ENCODE measurements at regions of chr1 and their contacts with region 1.

Region 1: DNA sequence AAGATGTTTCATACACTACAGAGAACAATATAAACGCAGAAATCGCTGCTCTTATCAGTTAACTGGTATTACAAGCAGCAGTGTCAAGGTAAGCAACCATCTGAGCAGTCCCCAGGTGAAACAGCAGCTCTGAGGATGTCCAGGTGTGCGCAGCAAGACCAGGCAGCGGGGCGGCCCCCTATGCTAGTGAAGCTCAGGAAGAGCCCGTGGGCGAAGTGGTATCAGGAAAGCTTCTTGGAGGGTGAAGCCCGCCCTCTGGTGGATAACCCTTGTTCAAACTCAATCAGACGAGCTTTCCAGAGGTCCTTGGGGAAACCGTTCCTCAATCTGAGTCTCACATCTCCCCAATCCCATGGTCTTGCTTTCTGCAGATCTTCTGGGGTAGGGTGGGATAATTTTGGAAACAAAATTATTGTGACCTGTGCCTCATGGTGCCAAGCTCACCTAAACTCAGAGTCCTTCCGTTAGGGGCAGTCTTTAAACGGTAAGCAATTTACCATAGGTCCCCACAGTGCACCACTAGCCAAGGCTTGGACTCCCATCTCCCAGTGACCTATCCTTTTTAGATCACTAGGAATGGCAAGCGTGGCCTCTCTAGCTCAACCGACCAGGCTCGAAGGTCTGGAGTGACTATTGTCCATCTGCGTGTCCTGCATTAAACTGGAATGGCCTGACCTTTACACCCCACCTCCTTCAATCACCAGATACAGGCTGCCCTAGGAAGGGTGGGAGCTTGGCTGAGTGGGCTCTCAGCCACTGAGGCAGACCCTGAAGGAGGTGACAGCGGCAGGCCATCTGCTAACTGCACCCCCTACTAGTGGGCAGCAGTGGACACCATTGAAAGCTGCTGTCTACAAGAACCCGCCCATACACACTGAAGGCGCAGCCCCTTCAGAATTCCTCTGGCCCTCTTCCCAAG is 13.6 kb upstream of the FAM110D start:
- DNase-seq: peak; percentile 88
- H3K4me3 Mint-ChIP-seq: no peak overlapping the region
- H3K27ac Mint-ChIP-seq: no peak overlapping the region
- H3K4me1 Mint-ChIP-seq: peaks cover 2% of the 10 kb centered on the region
- H3K27me3 Mint-ChIP-seq: no peaks in the 10 kb centered on the region

Region 2: DNA sequence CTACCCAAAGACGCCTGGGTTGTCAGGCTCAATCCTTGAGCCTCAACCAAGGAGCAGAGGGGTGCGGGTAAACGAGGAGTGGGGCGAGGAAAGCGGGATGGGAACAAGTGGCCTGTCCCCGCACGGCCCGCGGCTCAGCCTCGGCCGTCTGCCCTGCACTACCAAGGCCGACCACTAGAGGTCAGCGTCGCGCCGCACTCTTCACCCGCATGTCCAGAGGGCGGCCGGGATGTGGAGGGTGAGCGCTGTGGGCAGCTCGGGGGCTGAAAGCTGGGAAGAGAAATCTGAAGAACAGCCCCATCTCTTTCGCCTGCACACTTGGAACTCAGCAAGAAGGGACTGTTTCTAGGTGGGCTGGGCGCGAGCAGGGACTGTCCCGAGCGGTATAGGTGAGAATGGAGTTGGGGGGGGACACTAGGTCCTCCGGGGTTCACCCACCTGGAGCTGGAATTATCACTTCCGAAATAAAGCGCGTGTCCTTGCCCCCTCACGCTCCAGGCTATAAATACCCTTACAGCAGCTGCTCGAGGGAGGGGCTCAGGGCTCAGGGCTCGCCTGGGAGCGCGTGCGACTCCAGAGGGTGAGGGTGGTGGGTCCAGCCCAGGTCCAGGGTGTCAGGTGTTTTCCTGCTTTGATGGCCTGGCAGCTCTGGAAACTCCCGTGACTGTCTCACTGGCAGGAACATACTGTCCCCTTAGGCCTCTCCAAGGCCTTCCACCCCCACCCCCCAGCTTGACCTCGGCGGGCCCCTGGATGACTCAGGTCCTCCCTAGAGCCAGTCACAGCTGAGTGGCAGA is 109.1 kb before region 1 on chr1:
- CTCF ChIA-PET with region 1: interaction called, 26 read pairs
- intact Hi-C with region 1: loop called (anchors 1 kb)
- DNase-seq: peak; percentile 78
- H3K4me3 Mint-ChIP-seq: peak overlapping the region; percentile 88
- H3K27ac Mint-ChIP-seq: no peak overlapping the region
- H3K4me1 Mint-ChIP-seq: peaks cover 13% of the 10 kb centered on the region
- H3K27me3 Mint-ChIP-seq: peaks cover 3% of the 10 kb centered on the region

Region 3: GRCh38 chr1:26102526-26102925 is 42.8 kb before region 1 on chr1:
- CTCF ChIA-PET with region 1: interaction called, 143 read pairs
- intact Hi-C with region 1: loop called (anchors 1 kb)
- DNase-seq: no peak
- H3K4me3 Mint-ChIP-seq: no peak overlapping the region
- H3K27ac Mint-ChIP-seq: no peak overlapping the region
- H3K4me1 Mint-ChIP-seq: peaks cover 4% of the 10 kb centered on the region
- H3K27me3 Mint-ChIP-seq: no peaks in the 10 kb centered on the region

Region 4: GRCh38 chr1:26119892-26120608 is 25.2 kb before region 1 on chr1:
- CTCF ChIA-PET with region 1: interaction called, 28 read pairs
- intact Hi-C with region 1: no loop called
- DNase-seq: no peak
- H3K4me3 Mint-ChIP-seq: no peak overlapping the region
- H3K27ac Mint-ChIP-seq: peak overlapping the region; percentile 69
- H3K4me1 Mint-ChIP-seq: peaks cover 37% of the 10 kb centered on the region
- H3K27me3 Mint-ChIP-seq: no peaks in the 10 kb centered on the region

Region 5: DNA sequence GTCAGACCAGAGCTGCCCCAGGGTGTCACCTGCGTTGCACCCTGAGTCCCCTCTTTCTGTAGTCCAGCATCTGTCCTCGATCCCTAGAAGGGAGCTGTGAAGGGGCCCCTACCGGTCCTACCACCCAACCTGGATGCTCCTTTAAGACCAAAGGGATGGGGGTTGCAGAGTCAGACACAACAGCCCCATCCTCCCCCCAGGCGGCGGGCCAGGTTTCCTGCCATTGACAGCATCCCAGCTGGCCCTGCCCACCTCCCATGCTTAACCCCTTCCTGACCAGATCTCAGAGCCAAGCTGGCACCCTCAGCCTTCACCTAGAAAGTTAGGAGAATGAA is 11.4 kb after region 1 on chr1:
- CTCF ChIA-PET with region 1: interaction called, 21 read pairs
- intact Hi-C with region 1: no loop called
- DNase-seq: no peak
- H3K4me3 Mint-ChIP-seq: no peak overlapping the region
- H3K27ac Mint-ChIP-seq: no peak overlapping the region
- H3K4me1 Mint-ChIP-seq: peaks cover 3% of the 10 kb centered on the region
- H3K27me3 Mint-ChIP-seq: peaks cover 14% of the 10 kb centered on the region